Heart right ventricle (tissue), 16 donors: ENCODE measurements at regions of chr4 and their contacts with region 1.

Region 1: DNA sequence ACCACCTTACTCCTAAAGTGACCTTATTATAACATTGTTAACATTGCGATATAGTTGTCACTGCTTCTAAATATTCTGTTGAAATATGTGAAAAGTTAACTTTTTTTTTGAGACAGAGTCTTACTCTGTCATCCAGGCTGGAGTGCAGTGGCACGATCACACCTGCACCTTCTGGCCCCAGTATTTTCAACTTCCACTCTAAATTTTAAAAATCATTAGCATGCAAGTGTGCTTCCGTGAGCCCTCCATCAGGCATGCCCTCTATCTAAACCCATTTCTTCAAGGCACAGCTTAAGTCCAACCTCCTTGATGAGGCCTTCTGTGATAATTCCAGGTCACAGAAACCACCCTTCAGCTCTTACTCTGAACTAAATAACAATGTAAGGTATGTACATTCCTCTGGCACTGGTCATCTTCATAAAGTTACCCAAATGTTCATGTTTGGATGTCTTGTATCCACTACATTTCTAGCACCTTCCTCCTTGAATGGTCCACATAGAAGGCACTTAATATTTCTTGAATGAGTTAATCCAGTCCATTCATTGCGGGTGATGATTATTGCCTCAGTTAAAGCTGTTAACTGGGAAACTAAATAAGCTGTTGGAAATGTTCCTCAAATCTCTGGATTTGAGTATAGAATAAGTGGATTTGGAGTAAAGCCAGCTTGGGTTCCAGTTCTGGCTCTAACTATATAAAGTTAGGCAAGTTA is 38.6 kb upstream of the TMEM131L start:
- DNase-seq: no peak
- ATAC-seq: no peak
- H3K4me3 ChIP-seq: no peak overlapping the region
- H3K27ac ChIP-seq: no peak overlapping the region
- H3K4me1 ChIP-seq: peaks cover 0 to 5% (median 0%) of the 10 kb centered on the region in 9 donors
- H3K27me3 ChIP-seq: no peaks in the 10 kb centered on the region
- CTCF ChIP-seq: no peak

Region 2: GRCh38 chr4:153438916-153439756 is 11.6 kb after region 1 on chr4:
- intact Hi-C with region 1: loop called in 1 of 10 experiments (anchors 1 kb)
- DNase-seq: no peak
- ATAC-seq: peak in 7 of 8 donors; percentile 40 to 89 (median 70)
- H3K4me3 ChIP-seq: peak overlapping the region in 7 of 10 donors; percentile 7 to 34 (median 16)
- H3K27ac ChIP-seq: peak overlapping the region in 7 of 10 donors; percentile 3 to 71 (median 44)
- H3K4me1 ChIP-seq: peaks cover 0 to 16% (median 0%) of the 10 kb centered on the region in 9 donors
- H3K27me3 ChIP-seq: no peaks in the 10 kb centered on the region
- CTCF ChIP-seq: no peak

Region 3: DNA sequence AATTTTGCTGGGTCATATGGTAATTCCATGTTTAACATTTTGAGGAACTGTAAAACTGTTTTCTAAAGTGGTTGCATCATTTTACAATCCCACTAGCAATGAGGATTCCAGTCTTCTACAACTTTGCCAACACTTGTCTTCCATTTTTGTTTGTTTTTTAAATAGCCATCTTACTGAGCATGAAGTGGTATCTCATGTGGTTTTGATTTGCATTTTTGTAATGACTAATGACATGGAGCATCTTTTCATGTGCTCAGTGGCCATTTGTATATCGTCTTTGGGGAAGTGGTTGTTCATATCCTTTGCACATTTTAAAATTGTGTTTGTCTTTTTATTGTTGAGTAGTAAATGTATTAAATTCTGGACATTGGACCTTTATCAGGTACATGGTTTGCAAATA is 133.4 kb after region 1 on chr4:
- intact Hi-C with region 1: no loop called
- DNase-seq: no peak
- ATAC-seq: no peak
- H3K4me3 ChIP-seq: no peak overlapping the region
- H3K27ac ChIP-seq: no peak overlapping the region
- H3K4me1 ChIP-seq: peaks cover 0 to 31% (median 18%) of the 10 kb centered on the region in 9 donors
- H3K27me3 ChIP-seq: no peaks in the 10 kb centered on the region
- CTCF ChIP-seq: no peak